Prostate gland (tissue), 2 donors: ENCODE measurements at regions of chr14 and their contacts with region 1.

Region 1: GRCh38 chr14:95431199-95432143 is 85.0 kb downstream of the SYNE3 start:
- DNase-seq: peak; percentile 26
- H3K4me3 ChIP-seq: no peak overlapping the region
- H3K27ac ChIP-seq: no peak overlapping the region
- H3K4me1 ChIP-seq: no peaks in the 10 kb centered on the region
- H3K27me3 ChIP-seq: no peaks in the 10 kb centered on the region
- CTCF ChIP-seq: peak; percentile 26 to 69 (median 46)
- POLR2A ChIP-seq: no peak

Region 2: DNA sequence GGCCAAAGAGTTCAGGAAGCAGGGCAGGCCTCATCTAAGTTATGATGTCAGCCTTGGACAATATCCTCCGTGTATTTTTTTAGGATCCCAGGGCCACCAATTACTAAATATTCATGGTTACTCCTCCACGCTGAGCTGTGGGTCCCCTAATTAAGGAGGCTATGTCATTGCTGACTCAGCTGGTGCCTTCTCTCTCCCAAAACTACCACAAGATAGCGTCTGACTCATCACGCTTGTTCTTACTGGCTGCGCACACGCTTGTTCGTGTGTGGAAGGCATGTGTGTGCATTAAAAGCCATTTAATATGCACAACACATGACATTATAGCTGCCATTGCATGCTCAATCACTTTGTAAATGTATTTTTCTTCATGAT is 739.8 kb before region 1 on chr14:
- intact Hi-C with region 1: loop called (anchors 2 kb)
- DNase-seq: no peak
- H3K4me3 ChIP-seq: no peak overlapping the region
- H3K27ac ChIP-seq: no peak overlapping the region
- H3K4me1 ChIP-seq: no peaks in the 10 kb centered on the region
- H3K27me3 ChIP-seq: no peaks in the 10 kb centered on the region
- CTCF ChIP-seq: no peak
- POLR2A ChIP-seq: no peak

Region 3: DNA sequence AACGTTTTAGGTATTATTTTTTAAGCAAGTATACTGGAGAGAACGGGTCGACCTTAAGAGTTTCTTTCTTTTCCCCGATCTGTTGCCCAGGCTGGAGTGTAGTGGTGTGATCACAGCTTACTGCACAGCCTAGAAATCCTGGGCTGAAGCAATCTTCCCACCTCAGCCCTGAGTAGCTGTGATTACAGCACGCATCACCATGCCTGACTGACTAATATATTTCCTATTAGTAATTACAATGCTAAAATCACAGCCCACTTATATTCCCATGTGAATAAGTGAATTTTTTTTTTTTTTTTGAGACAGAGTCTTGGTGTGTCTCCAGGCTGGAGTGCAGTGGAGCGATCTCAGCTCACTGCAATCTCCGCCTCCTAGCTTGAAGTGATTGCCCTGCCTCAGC is 324.5 kb before region 1 on chr14:
- intact Hi-C with region 1: loop called (anchors 10 kb)
- DNase-seq: no peak
- H3K4me3 ChIP-seq: no peak overlapping the region
- H3K27ac ChIP-seq: no peak overlapping the region
- H3K4me1 ChIP-seq: no peaks in the 10 kb centered on the region
- H3K27me3 ChIP-seq: no peaks in the 10 kb centered on the region
- CTCF ChIP-seq: no peak
- POLR2A ChIP-seq: no peak

Region 4: GRCh38 chr14:95174184-95174792 is 257.2 kb before region 1 on chr14:
- intact Hi-C with region 1: loop called (anchors 2 kb)
- DNase-seq: no peak
- H3K4me3 ChIP-seq: no peak overlapping the region
- H3K27ac ChIP-seq: no peak overlapping the region
- H3K4me1 ChIP-seq: no peaks in the 10 kb centered on the region
- H3K27me3 ChIP-seq: no peaks in the 10 kb centered on the region
- CTCF ChIP-seq: peak in 2 of 4 experiments; percentile 34 to 44
- POLR2A ChIP-seq: no peak